Activated B cell treated with CpG ODN at 0.5 μM for 24 hours (primary cell): ENCODE measurements at regions of chr17 and their contacts with region 1.

Region 1: DNA sequence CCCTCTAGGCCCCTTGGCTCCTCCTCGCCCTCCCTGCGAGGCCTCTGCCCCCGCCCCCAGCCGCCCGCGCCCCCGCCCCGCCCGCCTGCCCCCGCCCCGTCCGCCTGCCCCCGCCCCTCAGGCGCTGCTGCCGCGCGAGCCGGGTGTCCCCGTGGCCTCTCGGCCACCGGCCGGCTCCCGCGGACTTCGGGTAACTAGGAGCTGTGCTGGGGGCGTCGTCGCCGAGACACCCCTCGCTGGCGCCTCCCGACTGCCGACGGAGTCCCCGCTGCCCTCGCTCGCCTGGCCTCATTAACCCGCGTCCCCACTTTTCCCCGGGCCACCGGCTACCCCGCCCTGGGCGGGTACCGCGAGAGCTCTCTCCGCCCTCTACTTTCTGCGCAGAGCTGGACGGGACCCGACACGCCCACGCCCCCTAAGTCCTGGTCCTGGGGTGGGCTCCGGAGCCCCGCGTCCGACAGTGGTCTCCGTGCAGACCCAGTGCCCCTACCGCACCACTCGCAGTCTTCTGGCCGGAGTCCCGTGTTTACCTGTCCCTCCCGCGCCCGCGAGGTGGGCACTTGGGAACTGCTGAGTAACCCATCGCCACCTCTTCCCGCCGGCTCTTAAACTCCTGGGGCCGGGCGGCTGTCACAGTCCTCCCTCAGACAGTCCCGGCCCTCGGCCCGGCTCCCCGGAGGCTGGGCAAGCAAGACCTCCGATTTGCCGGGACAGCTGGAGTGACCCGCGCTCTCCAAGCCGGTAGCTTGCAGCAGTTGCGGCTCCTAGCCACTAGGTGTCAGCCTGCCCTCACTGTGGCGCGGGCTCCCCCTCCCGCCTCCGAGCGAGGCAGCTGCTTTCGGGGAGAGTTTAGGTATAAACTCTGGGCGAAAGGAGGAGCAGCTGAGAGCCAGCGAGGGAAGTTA is at the start of gene TLCD1:
- DNase-seq: peak; percentile 87
- ATAC-seq: peak; percentile 40
- H3K4me3 Mint-ChIP-seq: peak within 1 kb of the TSS; percentile 95
- H3K27ac Mint-ChIP-seq: peak within 1 kb of the TSS; percentile 99
- H3K4me1 Mint-ChIP-seq: peaks cover 70% of the 10 kb centered on the region
- H3K27me3 Mint-ChIP-seq: no peaks in the 10 kb centered on the region
- CTCF ChIP-seq: peak; percentile 78
- total RNA-seq, gene TLCD1: 40.7 and 41.0 TPM in 2 replicates

Region 2: GRCh38 chr17:28737859-28738679 is 11.6 kb after region 1 on chr17:
- CTCF ChIA-PET with region 1: interaction called, 545 read pairs
- POLR2A ChIA-PET with region 1: interaction called, 2,384 read pairs
- intact Hi-C with region 1: loop called (anchors 1 kb)
- DNase-seq: peak; percentile 75
- ATAC-seq: peak; percentile 71
- H3K4me3 Mint-ChIP-seq: peak overlapping the region; percentile 80
- H3K27ac Mint-ChIP-seq: peak overlapping the region; percentile 99
- H3K4me1 Mint-ChIP-seq: peaks cover 97% of the 10 kb centered on the region
- H3K27me3 Mint-ChIP-seq: no peaks in the 10 kb centered on the region
- CTCF ChIP-seq: no peak

Region 3: GRCh38 chr17:28763804-28764266 is 37.4 kb after region 1 on chr17:
- CTCF ChIA-PET with region 1: interaction called, 112 read pairs
- POLR2A ChIA-PET with region 1: interaction called, 2,384 read pairs
- intact Hi-C with region 1: loop called (anchors 1 kb)
- DNase-seq: no peak
- ATAC-seq: peak; percentile 86
- H3K4me3 Mint-ChIP-seq: no peak overlapping the region
- H3K27ac Mint-ChIP-seq: no peak overlapping the region
- H3K4me1 Mint-ChIP-seq: peaks cover 10% of the 10 kb centered on the region
- H3K27me3 Mint-ChIP-seq: no peaks in the 10 kb centered on the region
- CTCF ChIP-seq: peak; percentile 80

Region 4: DNA sequence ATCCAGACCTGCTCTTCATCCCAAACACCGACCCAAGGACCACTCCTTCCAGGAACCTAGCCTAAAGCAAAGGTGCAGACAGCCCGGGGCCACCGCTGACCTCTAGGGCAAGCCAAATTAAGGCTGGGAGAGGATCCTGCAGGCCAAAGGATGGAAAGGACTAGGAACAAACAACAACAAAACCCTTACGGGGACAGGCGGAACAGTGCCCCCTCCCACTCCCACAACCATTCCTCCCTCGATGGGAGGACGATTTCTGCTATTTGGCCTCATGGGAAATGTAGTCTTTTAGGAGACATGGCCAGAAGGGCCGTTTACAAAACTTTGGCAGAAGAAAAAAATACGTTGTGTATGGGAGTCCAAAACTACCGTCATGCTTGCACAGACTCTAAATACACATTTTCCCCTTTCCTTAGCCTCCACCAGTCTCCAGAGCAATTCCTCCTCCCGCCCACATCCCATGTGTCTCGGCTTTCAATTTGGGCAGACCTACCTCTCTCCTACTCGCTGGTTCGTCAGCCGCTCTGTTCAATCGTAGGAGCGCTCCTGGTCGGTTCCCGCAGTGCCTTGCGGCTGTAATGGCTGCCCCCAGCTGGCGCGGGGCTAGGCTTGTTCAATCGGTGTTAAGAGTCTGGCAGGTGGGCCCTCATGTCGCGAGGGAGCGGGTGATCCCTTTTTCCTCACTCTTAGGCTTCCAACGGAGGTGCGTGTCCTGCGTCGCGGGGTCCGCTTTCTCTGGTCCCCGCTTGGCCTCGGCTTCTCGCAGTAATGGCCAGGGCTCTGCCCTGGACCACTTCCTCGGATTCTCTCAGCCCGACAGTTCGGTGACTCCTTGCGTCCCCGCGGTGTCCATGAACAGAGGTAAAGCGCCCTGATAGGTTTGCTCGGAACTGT is 128.2 kb after region 1 on chr17 and contains the start of gene ERAL1:
- CTCF ChIA-PET with region 1: interaction called, 6 read pairs
- POLR2A ChIA-PET with region 1: interaction called, 7 read pairs
- intact Hi-C with region 1: loop called (anchors 1 kb)
- DNase-seq: peak; percentile 67
- ATAC-seq: peak; percentile 99
- H3K4me3 Mint-ChIP-seq: peak within 1 kb of the TSS; percentile 89
- H3K27ac Mint-ChIP-seq: peak within 1 kb of the TSS; percentile 80
- H3K4me1 Mint-ChIP-seq: peaks cover 25% of the 10 kb centered on the region
- H3K27me3 Mint-ChIP-seq: no peaks in the 10 kb centered on the region
- CTCF ChIP-seq: no peak
- total RNA-seq, gene ERAL1: 47.6 and 49.2 TPM in 2 replicates

Region 5: GRCh38 chr17:28896884-28897768 is 170.6 kb after region 1 on chr17 and contains the start of gene FLOT2:
- CTCF ChIA-PET with region 1: interaction called, 37 read pairs
- POLR2A ChIA-PET with region 1: interaction called, 81 read pairs
- intact Hi-C with region 1: loop called (anchors 1 kb)
- DNase-seq: peak; percentile 66
- ATAC-seq: peak; percentile 58
- H3K4me3 Mint-ChIP-seq: peak within 1 kb of the TSS; percentile 96
- H3K27ac Mint-ChIP-seq: peak within 1 kb of the TSS; percentile 86
- H3K4me1 Mint-ChIP-seq: peaks cover 81% of the 10 kb centered on the region
- H3K27me3 Mint-ChIP-seq: no peaks in the 10 kb centered on the region
- CTCF ChIP-seq: no peak
- total RNA-seq, gene FLOT2: 303 and 321 TPM in 2 replicates

Region 6: DNA sequence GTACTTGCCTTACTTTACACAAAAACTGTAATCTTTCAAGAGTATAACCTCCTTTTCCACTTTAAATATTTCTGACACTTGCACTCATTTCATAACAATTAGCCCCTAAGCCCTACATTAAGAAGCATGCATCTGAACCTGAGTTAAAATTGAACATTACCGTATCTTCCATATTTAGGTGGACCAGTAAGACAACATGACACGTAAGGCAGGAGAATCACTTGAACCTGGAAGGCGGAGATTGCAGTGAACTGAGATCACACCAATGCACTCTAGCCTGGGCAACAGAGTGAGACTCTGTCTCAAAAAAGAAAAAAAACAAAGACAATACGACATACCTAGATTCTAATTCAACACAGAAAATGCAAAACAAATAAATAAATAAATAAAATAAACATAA is 217.9 kb after region 1 on chr17:
- CTCF ChIA-PET with region 1: interaction called, 8 read pairs
- POLR2A ChIA-PET with region 1: interaction called, 95 read pairs
- intact Hi-C with region 1: no loop called
- DNase-seq: no peak
- ATAC-seq: no peak
- H3K4me3 Mint-ChIP-seq: no peak overlapping the region
- H3K27ac Mint-ChIP-seq: no peak overlapping the region
- H3K4me1 Mint-ChIP-seq: peaks cover 86% of the 10 kb centered on the region
- H3K27me3 Mint-ChIP-seq: no peaks in the 10 kb centered on the region
- CTCF ChIP-seq: no peak